Body of pancreas (tissue), 4 donors: ENCODE measurements at regions of chr1 and their contacts with region 1.

Region 1: GRCh38 chr1:112722601-112723510 is 7.7 kb upstream of the PPM1J start:
- DNase-seq: no peak
- ATAC-seq: peak; percentile 16
- H3K4me3 ChIP-seq: no peak overlapping the region
- H3K27ac ChIP-seq: no peak overlapping the region
- H3K4me1 ChIP-seq: peaks cover 14% of the 10 kb centered on the region
- H3K27me3 ChIP-seq: no peaks in the 10 kb centered on the region
- CTCF ChIP-seq: no peak
- POLR2A ChIP-seq: no peak

Region 2: GRCh38 chr1:112605633-112606327 is 117.1 kb before region 1 on chr1:
- intact Hi-C with region 1: no loop called
- DNase-seq: no peak
- ATAC-seq: no peak
- H3K4me3 ChIP-seq: no peak overlapping the region
- H3K27ac ChIP-seq: no peak overlapping the region
- H3K4me1 ChIP-seq: no peaks in the 10 kb centered on the region
- H3K27me3 ChIP-seq: no peaks in the 10 kb centered on the region
- CTCF ChIP-seq: no peak
- POLR2A ChIP-seq: no peak

Region 3: DNA sequence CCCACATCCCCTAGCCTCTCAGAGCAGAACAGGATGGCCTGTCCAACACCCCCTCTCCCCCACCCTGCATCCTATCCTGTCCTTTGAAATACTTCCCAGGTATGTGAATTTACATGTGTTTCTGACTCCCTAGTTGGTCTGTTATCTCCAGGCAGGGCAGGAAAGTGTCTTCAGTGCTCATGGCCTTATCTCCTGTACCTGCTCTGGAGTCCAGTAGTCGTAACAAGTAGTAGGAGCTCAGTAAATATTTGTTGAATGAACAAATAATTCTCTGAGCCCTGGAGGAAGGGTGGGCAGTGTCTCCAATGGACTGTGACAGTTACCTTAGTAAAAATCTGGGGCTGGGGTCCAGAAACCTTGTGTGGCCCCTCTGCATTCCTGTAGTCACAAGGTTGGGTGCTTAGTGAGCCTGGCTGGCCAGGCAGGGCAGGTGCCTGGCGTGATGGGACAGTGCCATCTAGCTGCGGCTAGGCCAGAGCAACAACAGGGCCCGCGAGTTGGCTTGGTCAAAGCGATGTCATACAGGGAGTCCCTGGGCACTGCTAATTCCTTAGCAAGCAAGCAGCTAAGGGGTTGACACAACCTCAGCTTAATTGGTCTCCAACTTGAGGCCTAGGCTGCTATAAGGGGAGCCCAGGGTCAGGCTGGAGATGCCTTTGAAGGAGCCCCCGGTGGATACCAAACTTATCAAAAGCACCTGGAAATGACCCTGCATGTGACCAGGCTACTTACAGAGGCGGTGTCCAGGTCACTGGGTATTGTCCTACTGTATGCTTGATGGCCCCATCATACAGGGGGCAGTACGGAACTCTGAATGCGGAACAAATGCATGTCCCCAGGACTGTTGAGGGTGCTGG is 81.3 kb after region 1 on chr1:
- intact Hi-C with region 1: loop called (anchors 5 kb)
- DNase-seq: peak; percentile 80 to 88 (median 82)
- ATAC-seq: peak; percentile 91
- H3K4me3 ChIP-seq: no peak overlapping the region
- H3K27ac ChIP-seq: no peak overlapping the region
- H3K4me1 ChIP-seq: peaks cover 14% of the 10 kb centered on the region
- H3K27me3 ChIP-seq: no peaks in the 10 kb centered on the region
- CTCF ChIP-seq: peak; percentile 77 to 93 (median 85)
- POLR2A ChIP-seq: no peak

Region 4: GRCh38 chr1:113072757-113073478 is 350.1 kb after region 1 on chr1 and contains the start of gene LRIG2:
- intact Hi-C with region 1: loop called (anchors 10 kb)
- DNase-seq: peak; percentile 97 to 99 (median 98)
- ATAC-seq: peak; percentile 97
- H3K4me3 ChIP-seq: peak within 1 kb of the TSS; percentile 85 to 90
- H3K27ac ChIP-seq: peak within 1 kb of the TSS; percentile 83 to 92 (median 89)
- H3K4me1 ChIP-seq: peaks cover 37% of the 10 kb centered on the region
- H3K27me3 ChIP-seq: no peaks in the 10 kb centered on the region
- CTCF ChIP-seq: peak; percentile 63 to 99 (median 81)
- POLR2A ChIP-seq: peak; percentile 13 to 90 (median 88)
- total RNA-seq, gene LRIG2: 8.6 to 9.9 TPM